ENCODE measurements at regions of chrX and their contacts with region 1.

Region 1: DNA sequence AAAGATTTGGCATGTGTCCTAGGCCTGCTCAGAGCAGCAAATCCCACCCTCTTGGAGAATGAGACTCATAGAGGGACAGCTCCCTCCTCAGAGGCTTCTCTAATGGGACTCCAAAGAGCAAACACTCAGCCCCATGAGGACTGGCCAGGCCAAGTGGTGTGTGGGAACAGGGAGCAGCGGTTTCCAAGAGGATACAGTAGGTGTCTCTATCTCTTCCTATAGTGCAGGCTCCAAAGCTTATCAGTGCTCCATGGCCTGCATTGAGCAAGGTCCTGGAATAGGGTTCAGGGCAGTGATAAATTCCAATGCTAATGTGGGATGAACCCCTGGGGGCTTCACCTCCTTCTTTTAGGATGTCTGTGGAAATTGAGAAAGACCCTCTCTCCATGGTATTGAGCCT is 15.7 kb upstream of the MAGEA10 start:
- DNase-seq: peak; percentile 24 to 56 (median 34)
- ATAC-seq: peak; percentile 47
- H3K4me3 ChIP-seq: no peak overlapping the region
- H3K27ac ChIP-seq: peak overlapping the region; percentile 51
- H3K4me1 ChIP-seq: peaks cover 17 to 82% of the 10 kb centered on the region in 2 experiments
- H3K27me3 ChIP-seq: no peaks in the 10 kb centered on the region
- CTCF ChIP-seq: peak in 1 of 3 experiments; percentile 37; a peak in 2 of 6 replicates
- EP300 ChIP-seq: 0 out of 2 replicates have a peak, but pooled peaks have one; percentile 19
- POLR2A ChIP-seq: no peak
- RAD21 ChIP-seq: peak; percentile 14 to 55

Region 2: DNA sequence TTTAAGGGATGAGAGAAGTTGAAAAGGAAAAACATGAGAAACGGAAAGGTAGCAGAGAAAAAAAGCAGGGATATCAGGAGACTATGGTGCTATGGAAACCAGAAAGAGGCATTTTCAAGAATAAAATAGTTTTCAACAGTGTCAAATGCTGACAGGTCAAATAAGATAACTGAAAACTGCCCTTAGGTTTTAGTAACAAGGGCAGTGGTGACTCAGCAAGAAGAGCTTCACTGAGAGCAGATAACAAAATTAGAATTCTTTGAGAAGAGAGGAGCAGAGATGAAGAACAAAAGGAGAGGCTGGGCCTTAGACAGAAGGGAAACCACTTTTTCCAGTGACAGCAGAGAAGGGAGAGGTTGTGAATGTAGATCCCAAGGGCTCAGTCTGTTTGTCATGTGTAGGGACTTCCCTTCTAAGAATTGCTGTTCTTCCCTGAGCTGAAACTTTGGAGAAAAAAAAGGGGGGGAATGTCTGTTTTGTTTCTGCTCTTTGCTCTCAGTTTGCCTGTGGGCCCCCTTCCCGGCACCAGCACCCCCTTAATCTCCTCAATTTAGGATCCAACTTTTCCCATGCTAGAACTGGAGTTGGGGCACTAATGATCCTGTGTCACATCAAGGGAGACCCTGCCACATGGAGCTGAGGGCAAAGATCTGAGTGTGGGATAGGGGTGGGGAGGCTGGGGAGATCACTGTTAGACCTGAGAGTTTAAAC is 11.1 kb after region 1 on chrX:
- CTCF ChIA-PET with region 1: no interaction called
- POLR2A ChIA-PET with region 1: interaction called, 14 read pairs
- in situ Hi-C with region 1: no loop called
- intact Hi-C with region 1: loop called (anchors 1 kb)
- DNase-seq: peak; percentile 43 to 85 (median 53)
- ATAC-seq: peak; percentile 90
- H3K4me3 ChIP-seq: no peak overlapping the region
- H3K27ac ChIP-seq: peak overlapping the region; percentile 90
- H3K4me1 ChIP-seq: peaks cover 0 to 36% of the 10 kb centered on the region in 2 experiments; a peak in 4 of 5 replicates
- H3K27me3 ChIP-seq: no peaks in the 10 kb centered on the region
- CTCF ChIP-seq: no peak
- EP300 ChIP-seq: peak; percentile 74; the same call in 1 of the 2 replicates
- POLR2A ChIP-seq: no peak
- RAD21 ChIP-seq: peak in 1 of 2 experiments; percentile 12; a peak in 1 of 4 replicates

Region 3: DNA sequence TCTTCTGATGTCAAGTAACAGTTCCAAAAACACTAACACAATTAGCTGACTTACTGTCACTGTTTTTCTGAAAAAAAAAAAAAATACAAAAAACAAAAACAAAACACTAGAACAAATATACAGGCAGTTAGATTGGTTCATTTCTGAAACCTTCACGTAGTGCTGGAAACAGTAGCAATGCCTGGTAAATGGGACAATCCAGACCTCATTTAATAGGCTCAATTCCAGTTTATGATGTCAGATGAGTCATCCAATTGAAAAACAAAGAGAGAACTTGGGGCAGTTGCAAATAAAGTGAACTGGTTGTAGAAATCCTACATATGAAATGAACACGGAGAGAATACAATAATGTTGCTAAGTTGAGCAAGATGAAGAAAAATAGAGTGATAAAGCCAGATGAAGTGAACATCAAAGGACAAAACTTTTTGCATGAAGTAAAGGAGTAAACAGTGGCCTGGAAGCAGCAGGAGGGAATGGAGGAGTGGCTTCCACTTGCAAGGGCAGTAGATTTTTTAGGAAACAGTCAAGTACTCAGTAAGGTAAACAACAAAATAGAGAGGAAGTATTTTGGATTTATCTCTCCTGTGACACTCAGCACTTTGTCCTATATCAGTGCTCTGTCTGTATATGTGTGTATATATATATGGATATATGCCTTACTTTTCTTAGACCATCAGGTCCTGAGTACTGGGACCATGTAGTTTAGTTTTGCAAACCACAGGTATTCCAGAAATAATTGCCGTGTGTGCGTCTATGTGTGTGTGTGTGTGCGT is 23.6 kb after region 1 on chrX:
- CTCF ChIA-PET with region 1: no interaction called
- POLR2A ChIA-PET with region 1: no interaction called
- in situ Hi-C with region 1: no loop called
- intact Hi-C with region 1: loop called (anchors 2 kb)
- DNase-seq: peak in 2 of 4 experiments; percentile 14 to 58
- ATAC-seq: peak; percentile 80
- H3K4me3 ChIP-seq: no peak overlapping the region
- H3K27ac ChIP-seq: peak overlapping the region; percentile 83
- H3K4me1 ChIP-seq: peaks cover 4 to 26% of the 10 kb centered on the region in 2 experiments
- H3K27me3 ChIP-seq: no peaks in the 10 kb centered on the region
- CTCF ChIP-seq: no peak
- EP300 ChIP-seq: peak; percentile 79; the same call in 1 of the 2 replicates
- POLR2A ChIP-seq: no peak
- RAD21 ChIP-seq: peak in 1 of 2 experiments; percentile 12; a peak in 1 of 4 replicates

Measured in K562 (cell line).